ENCODE measurements at regions of chr15 and their contacts with region 1.

Region 1: DNA sequence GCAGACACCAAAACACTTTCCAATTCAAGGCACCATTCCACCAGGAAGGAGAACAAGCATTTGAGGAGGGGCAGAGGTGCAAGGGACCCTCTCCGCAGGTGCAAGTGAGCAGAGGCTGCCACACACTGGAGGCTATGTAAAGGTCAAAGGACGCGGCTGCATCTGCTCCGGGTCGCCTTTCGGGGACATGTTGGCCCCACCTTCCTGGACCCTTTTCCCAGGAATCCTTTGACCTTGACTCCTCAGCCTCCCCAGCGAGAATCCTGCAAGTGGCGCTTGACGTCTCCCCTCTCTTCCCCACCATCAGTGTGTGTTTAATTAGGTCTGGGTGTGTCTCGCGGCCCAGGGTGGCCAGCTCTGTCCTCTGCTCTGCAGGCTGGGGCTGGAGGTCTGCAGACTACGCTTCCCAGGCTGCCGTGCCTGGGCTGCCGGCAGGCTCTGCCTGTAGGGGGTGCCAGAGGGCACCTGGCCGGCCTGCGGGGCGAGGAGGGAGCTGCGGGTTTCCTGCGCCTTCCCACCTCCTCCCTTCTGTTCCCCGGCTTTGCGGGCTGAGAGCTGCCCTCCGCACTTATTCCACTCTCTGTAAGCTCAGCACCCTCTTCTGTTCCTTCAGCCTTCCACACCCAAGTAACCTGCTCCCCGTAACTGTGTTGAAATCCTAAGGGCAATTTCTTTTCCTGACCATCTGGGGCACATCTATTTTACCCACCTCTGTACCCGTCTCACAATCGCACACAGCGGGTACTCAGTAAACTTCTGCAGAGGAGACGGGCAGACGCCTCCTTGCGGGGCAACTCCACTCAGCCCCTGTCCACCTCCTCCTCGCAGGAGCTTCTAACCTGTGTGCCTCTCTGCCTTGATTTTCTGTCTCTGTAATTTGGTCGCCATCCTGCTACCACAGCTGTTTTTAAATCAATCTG is 129.8 kb downstream of the NSMCE3 start:
- DNase-seq: no peak
- H3K4me3 ChIP-seq: peak overlapping the region; percentile 19
- H3K27ac ChIP-seq: no peak overlapping the region
- H3K4me1 ChIP-seq: peaks cover 6% of the 10 kb centered on the region
- H3K27me3 ChIP-seq: peaks cover 77% of the 10 kb centered on the region
- CTCF ChIP-seq: peak; percentile 87

Region 2: DNA sequence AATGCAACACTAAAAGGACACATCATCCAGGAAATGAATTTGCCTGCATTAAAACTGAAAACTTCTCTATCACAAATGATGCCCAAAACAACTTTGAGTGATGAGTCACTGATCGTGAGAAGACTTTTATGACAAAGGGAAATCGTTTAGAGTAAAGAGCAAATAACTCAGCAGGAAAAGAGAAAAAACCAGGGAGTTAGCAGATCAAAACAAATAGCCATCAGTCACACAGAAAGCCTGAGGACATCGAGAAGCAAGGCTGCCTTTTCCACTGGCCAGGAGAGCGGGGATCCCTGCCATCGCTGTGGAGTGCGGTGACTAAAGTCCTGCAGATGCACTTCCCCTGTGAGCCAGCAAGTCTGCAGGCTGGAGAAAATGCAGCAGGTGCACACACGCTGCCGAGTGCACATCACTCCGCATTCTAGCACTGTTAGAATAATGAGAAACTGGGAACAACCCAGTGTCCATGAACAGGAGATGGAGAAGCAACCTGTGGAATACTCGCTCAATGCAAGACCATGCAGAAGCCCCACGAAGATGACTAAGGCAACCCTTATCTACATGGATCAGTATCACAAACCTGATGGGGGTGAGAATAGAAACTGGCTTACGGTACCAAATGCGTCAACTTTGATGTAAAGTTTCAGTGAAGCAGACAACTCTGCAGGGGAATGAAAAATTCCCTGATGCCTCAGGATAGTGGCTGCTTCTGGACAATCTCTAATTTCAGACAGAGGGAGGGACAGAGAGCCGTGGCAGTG is 43.5 kb after region 1 on chr15:
- intact Hi-C with region 1: no loop called
- DNase-seq: no peak
- H3K4me3 ChIP-seq: no peak overlapping the region
- H3K27ac ChIP-seq: no peak overlapping the region
- H3K4me1 ChIP-seq: no peaks in the 10 kb centered on the region
- H3K27me3 ChIP-seq: peaks cover 28% of the 10 kb centered on the region
- CTCF ChIP-seq: no peak

Region 3: GRCh38 chr15:29424118-29424517 is 284.3 kb after region 1 on chr15:
- intact Hi-C with region 1: loop called (anchors 10 kb)
- DNase-seq: no peak
- H3K4me3 ChIP-seq: no peak overlapping the region
- H3K27ac ChIP-seq: no peak overlapping the region
- H3K4me1 ChIP-seq: no peaks in the 10 kb centered on the region
- H3K27me3 ChIP-seq: peaks cover 5% of the 10 kb centered on the region
- CTCF ChIP-seq: no peak

Measured in left ventricle myocardium inferior (tissue), 1 donor.